H1 (cell line): ENCODE measurements at regions of chr9 and their contacts with region 1.

Region 1: DNA sequence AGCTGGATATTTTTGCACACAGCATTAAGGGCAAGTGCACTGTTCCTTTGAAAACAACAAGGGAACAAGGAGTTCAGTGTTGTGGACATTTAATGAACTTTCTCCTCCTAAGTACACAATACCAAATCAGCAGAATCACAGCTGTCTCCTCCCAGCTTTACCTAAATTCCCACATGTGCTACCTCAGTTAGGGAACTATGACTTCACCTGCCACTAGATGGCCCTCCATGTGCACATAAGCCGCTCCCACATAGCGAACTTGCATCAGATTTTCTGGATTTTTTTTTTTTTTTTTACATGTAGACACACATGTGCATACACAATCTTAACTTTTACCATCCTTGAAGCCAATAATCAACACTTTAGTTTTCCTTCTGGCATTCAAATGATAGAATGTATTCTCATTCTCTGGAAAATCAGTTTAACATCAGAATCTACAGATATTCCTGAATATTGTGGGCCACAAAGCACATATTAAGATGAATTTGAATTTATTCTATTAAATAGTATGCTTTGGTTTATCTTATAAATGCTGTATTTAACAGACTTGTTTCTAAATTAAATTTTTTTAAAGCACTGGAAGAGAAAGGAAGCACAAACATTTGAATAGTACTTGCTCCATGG is 123.6 kb downstream of the PALM2AKAP2 start:
- DNase-seq: peak; percentile 13 to 56
- H3K4me3 ChIP-seq: no peak overlapping the region
- H3K27ac ChIP-seq: no peak overlapping the region
- H3K4me1 ChIP-seq: peaks cover 0 to 5% (median 0%) of the 10 kb centered on the region in 4 experiments; a peak in 2 of 7 replicates
- H3K27me3 ChIP-seq: no peaks in the 10 kb centered on the region
- CTCF ChIP-seq: peak; percentile 54 to 88 (median 86)
- EP300 ChIP-seq: no peak
- POLR2A ChIP-seq: no peak
- RAD21 ChIP-seq: peak; percentile 96 to 98

Region 2: GRCh38 chr9:109799792-109800191 is 103.8 kb before region 1 on chr9:
- CTCF ChIA-PET with region 1: no interaction called
- POLR2A ChIA-PET with region 1: no interaction called
- DNase-seq: no peak
- H3K4me3 ChIP-seq: no peak overlapping the region
- H3K27ac ChIP-seq: no peak overlapping the region
- H3K4me1 ChIP-seq: no peaks in the 10 kb centered on the region
- H3K27me3 ChIP-seq: no peaks in the 10 kb centered on the region
- CTCF ChIP-seq: no peak
- EP300 ChIP-seq: no peak
- POLR2A ChIP-seq: no peak
- RAD21 ChIP-seq: no peak

Region 3: GRCh38 chr9:109887079-109887478 is 16.5 kb before region 1 on chr9:
- CTCF ChIA-PET with region 1: interaction called, 11 read pairs
- POLR2A ChIA-PET with region 1: no interaction called
- DNase-seq: no peak
- H3K4me3 ChIP-seq: no peak overlapping the region
- H3K27ac ChIP-seq: no peak overlapping the region
- H3K4me1 ChIP-seq: peaks cover 0 to 3% (median 0%) of the 10 kb centered on the region in 4 experiments; a peak in 1 of 7 replicates
- H3K27me3 ChIP-seq: no peaks in the 10 kb centered on the region
- CTCF ChIP-seq: no peak
- EP300 ChIP-seq: no peak
- POLR2A ChIP-seq: no peak
- RAD21 ChIP-seq: no peak

Region 4: DNA sequence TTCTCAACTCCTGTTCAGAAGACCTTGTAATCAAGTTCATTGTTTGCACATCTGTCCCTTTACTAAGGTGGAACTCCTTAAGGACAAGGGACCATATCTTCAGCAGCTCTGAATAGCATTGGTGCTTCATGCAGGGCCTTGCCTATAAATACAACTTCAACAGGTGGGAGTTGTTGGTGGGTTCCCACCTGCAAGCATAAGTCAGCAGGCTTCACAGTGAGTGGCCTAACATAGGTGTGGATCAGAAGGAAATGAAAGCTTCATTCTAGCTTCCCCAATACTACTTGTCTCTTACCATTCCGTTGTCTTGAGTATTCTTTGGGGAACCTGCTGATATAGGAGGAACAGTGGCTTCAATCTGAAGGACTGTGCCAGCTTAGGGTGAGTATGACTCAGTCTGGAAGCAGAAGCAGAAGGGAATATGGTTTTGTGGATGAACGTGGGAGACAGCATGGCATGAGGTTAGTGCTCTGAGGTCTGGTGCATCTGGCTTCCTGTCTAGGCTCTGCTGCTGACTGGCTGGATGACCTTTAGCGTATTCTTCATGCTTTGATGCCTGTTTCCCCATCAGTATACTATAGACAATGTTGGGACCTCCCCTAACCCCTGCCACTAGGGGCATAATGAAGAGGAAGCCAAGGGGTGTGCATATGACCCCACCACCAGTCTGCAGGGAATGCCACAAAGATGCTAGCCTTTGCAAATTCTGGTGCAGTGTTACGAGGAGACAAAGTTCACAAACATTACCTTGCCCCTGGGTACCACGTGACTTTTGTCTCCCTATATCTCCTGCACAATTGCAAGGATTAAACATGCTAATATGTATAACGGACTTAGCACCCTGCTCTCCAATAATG is 68.6 kb after region 1 on chr9:
- CTCF ChIA-PET with region 1: interaction called, 16 read pairs
- POLR2A ChIA-PET with region 1: no interaction called
- DNase-seq: no peak
- H3K4me3 ChIP-seq: no peak overlapping the region
- H3K27ac ChIP-seq: no peak overlapping the region
- H3K4me1 ChIP-seq: no peaks in the 10 kb centered on the region; a peak in 1 of 7 replicates
- H3K27me3 ChIP-seq: no peaks in the 10 kb centered on the region
- CTCF ChIP-seq: peak in 2 of 3 experiments; percentile 29 to 53; a peak in 3 of 4 replicates
- EP300 ChIP-seq: no peak
- POLR2A ChIP-seq: no peak
- RAD21 ChIP-seq: peak; percentile 5 to 29; a peak in 1 of 4 replicates

Region 5: GRCh38 chr9:110058304-110058953 is 154.8 kb after region 1 on chr9:
- CTCF ChIA-PET with region 1: interaction called, 127 read pairs
- POLR2A ChIA-PET with region 1: no interaction called
- DNase-seq: peak; percentile 66 to 69
- H3K4me3 ChIP-seq: no peak overlapping the region
- H3K27ac ChIP-seq: no peak overlapping the region
- H3K4me1 ChIP-seq: peaks cover 0 to 7% (median 4%) of the 10 kb centered on the region in 4 experiments; a peak in 4 of 7 replicates
- H3K27me3 ChIP-seq: no peaks in the 10 kb centered on the region
- CTCF ChIP-seq: peak; percentile 61 to 87 (median 81)
- EP300 ChIP-seq: no peak
- POLR2A ChIP-seq: no peak
- RAD21 ChIP-seq: peak; percentile 94 to 96

Region 6: GRCh38 chr9:110126966-110127864 is 223.6 kb after region 1 on chr9:
- CTCF ChIA-PET with region 1: interaction called, 11 read pairs
- POLR2A ChIA-PET with region 1: no interaction called
- DNase-seq: no peak
- H3K4me3 ChIP-seq: no peak overlapping the region
- H3K27ac ChIP-seq: no peak overlapping the region
- H3K4me1 ChIP-seq: peaks cover 11 to 63% (median 42%) of the 10 kb centered on the region in 4 experiments
- H3K27me3 ChIP-seq: no peaks in the 10 kb centered on the region; a peak in 1 of 7 replicates
- CTCF ChIP-seq: no peak
- EP300 ChIP-seq: no peak
- POLR2A ChIP-seq: peak in 1 of 2 experiments; percentile 23; a peak in 1 of 3 replicates
- RAD21 ChIP-seq: 0 out of 4 replicates have a peak, but pooled peaks of 1 of the 2 experiments have one; percentile 10